ENCODE measurements at regions of chr14 and their contacts with region 1.

Region 1: DNA sequence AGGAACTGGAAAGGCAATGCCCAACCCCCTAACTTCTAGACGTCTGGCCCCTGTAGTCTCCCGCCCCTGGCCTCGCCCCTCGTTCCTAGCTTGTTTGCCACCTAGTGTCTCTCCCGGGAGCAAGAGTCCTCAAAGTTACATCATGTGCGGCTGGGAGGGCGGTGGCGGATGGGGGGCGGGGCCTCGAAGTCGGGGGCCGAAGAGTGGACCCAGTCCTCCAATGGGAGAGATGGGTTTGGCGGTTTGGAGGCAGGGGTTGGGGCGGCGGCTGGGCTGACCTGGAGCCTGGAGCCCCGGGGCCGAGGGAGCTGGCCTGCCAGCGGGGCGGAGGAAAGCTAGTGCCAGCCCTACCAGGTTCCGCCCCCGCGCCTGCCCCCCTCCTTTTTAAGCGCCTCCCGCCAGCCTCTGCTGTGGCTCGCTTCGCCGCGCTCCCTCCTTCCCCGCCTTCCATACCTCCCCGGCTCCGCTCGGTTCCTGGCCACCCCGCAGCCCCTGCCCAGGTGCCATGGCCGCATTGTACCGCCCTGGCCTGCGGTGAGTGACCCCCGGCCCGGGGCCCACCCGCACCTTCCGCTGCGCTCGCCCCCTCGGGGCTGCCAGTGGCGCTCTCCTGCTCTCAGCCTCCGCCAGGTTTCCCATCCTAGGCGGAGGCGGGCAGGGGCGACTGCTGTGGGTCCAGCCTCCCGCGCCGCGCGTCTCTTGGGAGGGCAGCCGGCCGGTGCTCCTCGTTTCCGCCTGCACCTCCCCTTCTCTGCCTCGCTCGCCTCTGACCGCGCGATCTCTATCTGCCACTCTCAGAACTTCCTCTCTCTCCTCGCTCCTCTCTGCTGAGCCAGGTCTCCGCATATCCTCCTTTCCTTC is at the start of gene PCK2:
- DNase-seq: peak; percentile 70
- H3K4me3 Mint-ChIP-seq: peak within 1 kb of the TSS; percentile 100
- H3K27ac Mint-ChIP-seq: peak within 1 kb of the TSS; percentile 97
- H3K4me1 Mint-ChIP-seq: peaks cover 36% of the 10 kb centered on the region
- H3K27me3 Mint-ChIP-seq: no peaks in the 10 kb centered on the region
- total RNA-seq, gene PCK2: 55.0 and 62.8 TPM in 2 replicates

Region 2: GRCh38 chr14:23984891-23985602 is 109.1 kb before region 1 on chr14:
- intact Hi-C with region 1: loop called (anchors 5 kb)
- DNase-seq: no peak
- H3K4me3 Mint-ChIP-seq: no peak overlapping the region
- H3K27ac Mint-ChIP-seq: no peak overlapping the region
- H3K4me1 Mint-ChIP-seq: peaks cover 25% of the 10 kb centered on the region
- H3K27me3 Mint-ChIP-seq: no peaks in the 10 kb centered on the region

Region 3: GRCh38 chr14:24036169-24036962 is 57.8 kb before region 1 on chr14:
- intact Hi-C with region 1: loop called (anchors 2 kb)
- DNase-seq: peak; percentile 70
- H3K4me3 Mint-ChIP-seq: peak overlapping the region; percentile 88
- H3K27ac Mint-ChIP-seq: peak overlapping the region; percentile 73
- H3K4me1 Mint-ChIP-seq: peaks cover 6% of the 10 kb centered on the region
- H3K27me3 Mint-ChIP-seq: peaks cover 7% of the 10 kb centered on the region

Region 4: GRCh38 chr14:24058260-24058950 is 35.7 kb before region 1 on chr14:
- intact Hi-C with region 1: loop called (anchors 1 kb)
- DNase-seq: peak; percentile 24
- H3K4me3 Mint-ChIP-seq: no peak overlapping the region
- H3K27ac Mint-ChIP-seq: peak overlapping the region; percentile 65
- H3K4me1 Mint-ChIP-seq: peaks cover 13% of the 10 kb centered on the region
- H3K27me3 Mint-ChIP-seq: peaks cover 3% of the 10 kb centered on the region

Region 5: GRCh38 chr14:24108336-24108874 is 14.3 kb after region 1 on chr14:
- intact Hi-C with region 1: loop called (anchors 1 kb)
- DNase-seq: no peak
- H3K4me3 Mint-ChIP-seq: peak overlapping the region; percentile 24
- H3K27ac Mint-ChIP-seq: peak overlapping the region; percentile 95
- H3K4me1 Mint-ChIP-seq: peaks cover 34% of the 10 kb centered on the region
- H3K27me3 Mint-ChIP-seq: no peaks in the 10 kb centered on the region

Region 6: DNA sequence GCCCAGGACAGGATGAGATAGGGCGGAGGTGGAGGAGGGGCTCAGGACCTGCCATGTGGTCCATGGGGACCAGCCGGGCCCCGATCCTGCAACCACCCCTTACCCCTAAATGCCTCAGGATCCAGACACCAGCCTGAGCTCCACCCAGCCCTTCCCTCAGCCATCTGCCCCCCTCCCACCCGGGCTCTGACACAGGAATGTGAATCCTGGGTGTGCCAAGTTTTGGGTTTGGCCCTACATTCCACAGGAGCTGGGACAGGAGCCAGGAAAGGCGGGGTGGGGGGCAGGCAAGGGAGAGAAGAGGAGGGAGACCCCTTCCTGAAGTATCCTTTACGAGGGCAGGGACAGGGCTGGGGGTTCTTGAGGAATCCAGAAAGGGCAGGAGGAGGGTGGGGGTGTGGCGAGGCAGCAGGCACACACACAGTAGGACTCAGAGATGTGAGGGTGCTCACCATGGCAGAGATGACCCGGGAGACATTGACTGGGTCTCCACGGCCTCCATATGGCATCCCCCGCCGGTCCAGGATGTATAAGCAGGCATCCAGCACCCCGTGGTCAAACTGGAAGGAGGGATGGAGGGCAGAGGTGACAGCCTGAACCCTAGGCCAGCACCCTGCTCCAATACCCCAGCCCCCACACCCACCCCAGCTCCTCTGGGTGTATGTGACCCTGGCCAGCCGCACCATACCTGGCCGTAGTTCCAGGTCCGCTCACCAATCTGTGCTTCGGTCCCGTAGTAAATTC is 165.3 kb after region 1 on chr14:
- intact Hi-C with region 1: no loop called
- DNase-seq: no peak
- H3K4me3 Mint-ChIP-seq: no peak overlapping the region
- H3K27ac Mint-ChIP-seq: no peak overlapping the region
- H3K4me1 Mint-ChIP-seq: no peaks in the 10 kb centered on the region
- H3K27me3 Mint-ChIP-seq: no peaks in the 10 kb centered on the region

Measured in activated T-helper 1 cell treated with anti-CD3 and anti-CD28 coated beads, Interleukin-12 subunit alpha, Interleukin-12 subunit beta, Interleukin-2, Interleukin-4 antibody, amounts not matched to agents 30 ng/mL and 10 ng/mL and 1 ng/mL, durations not matched to agents 14 hours and 24 hours and 36 hours (primary cell).